PC-3 (cell line): ENCODE measurements at regions of chr17 and their contacts with region 1.

Region 1: DNA sequence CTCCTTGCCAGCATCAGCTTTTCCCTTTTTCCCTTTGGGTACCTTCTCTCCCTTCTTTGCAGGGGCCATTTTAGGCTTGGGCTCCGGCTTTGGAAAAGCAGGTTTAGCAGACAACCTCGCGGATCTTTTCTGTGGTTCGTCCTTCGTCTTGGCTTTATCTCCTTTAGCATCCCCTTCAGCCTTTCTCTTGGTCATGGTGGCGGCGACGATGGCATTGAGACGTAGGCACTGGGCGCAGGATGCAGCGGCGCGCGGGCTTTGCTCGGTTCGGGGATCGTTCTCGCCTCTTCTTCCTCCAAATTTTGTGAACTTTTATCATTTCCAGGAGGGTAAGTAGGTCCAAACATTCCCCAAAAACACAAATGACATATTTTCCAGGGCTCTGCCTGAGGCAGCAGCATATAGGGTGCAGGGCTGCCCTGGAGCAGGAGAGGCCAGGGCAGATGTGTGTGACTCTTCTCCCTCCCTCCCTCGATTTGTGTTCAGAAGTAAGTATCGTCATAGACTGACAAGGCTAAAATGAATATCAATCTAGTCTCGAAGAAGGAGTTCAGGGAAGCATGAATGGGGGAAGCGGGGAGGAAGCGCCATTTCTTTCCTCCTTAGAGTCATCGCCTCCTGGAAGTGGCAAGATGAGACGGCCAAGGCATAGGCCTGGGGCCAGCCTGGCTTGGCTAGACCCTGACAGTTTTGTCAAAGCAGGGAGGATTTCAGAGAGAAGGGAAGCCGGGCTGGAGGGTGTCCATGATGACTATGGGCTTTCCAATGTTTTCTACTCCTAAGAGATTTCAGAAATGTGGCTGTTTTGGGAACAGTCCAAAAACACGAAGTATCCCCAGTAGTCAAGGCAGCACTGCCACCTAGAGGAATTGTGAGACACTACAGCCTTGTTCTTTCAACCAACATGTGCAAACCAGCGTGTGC is 13.2 kb downstream of the CHCT1 start:
- DNase-seq: peak; percentile 98
- ATAC-seq: peak; percentile 68
- H3K4me3 ChIP-seq: peak overlapping the region; percentile 17; the same call in 1 of the 2 replicates
- H3K27ac ChIP-seq: no peak overlapping the region
- H3K4me1 ChIP-seq: peaks cover 7% of the 10 kb centered on the region
- H3K27me3 ChIP-seq: no peaks in the 10 kb centered on the region
- CTCF ChIP-seq: peak; percentile 98

Region 2: GRCh38 chr17:60127068-60128054 is 308.1 kb before region 1 on chr17:
- CTCF ChIA-PET with region 1: no interaction called
- POLR2A ChIA-PET with region 1: no interaction called
- intact Hi-C with region 1: no loop called
- DNase-seq: no peak
- ATAC-seq: no peak
- H3K4me3 ChIP-seq: no peak overlapping the region
- H3K27ac ChIP-seq: no peak overlapping the region
- H3K4me1 ChIP-seq: no peaks in the 10 kb centered on the region
- H3K27me3 ChIP-seq: no peaks in the 10 kb centered on the region
- CTCF ChIP-seq: no peak

Region 3: GRCh38 chr17:60142872-60143499 is 292.5 kb before region 1 on chr17:
- CTCF ChIA-PET with region 1: interaction called, 5 read pairs
- POLR2A ChIA-PET with region 1: no interaction called
- intact Hi-C with region 1: loop called (anchors 1 kb)
- DNase-seq: peak; percentile 96
- ATAC-seq: peak; percentile 89
- H3K4me3 ChIP-seq: peak overlapping the region; percentile 62
- H3K27ac ChIP-seq: no peak overlapping the region
- H3K4me1 ChIP-seq: peaks cover 11% of the 10 kb centered on the region
- H3K27me3 ChIP-seq: peaks cover 4% of the 10 kb centered on the region; the same call in 1 of the 2 replicates
- CTCF ChIP-seq: peak; percentile 96

Region 4: DNA sequence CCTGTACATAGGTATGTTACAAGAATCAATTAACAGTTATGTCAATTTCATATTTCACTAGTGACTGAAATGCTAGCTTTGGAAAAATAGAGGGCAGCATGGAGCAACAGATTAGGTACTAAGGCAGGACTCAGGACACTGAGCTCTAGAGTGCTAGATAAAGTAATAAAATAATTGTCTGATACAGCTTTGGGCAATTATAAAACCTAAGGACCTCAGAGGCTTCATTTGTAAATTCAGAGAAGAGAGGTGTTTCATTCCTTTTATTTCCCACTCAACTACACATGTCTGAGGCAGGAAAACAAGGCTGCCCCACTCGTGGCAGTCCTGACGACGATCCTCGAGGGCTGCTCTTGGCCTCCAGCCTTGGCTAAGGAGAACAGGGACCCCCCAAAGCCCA is 204.3 kb before region 1 on chr17:
- CTCF ChIA-PET with region 1: interaction called, 5 read pairs
- POLR2A ChIA-PET with region 1: no interaction called
- intact Hi-C with region 1: loop called (anchors 1 kb)
- DNase-seq: peak; percentile 61
- ATAC-seq: peak; percentile 84
- H3K4me3 ChIP-seq: no peak overlapping the region
- H3K27ac ChIP-seq: no peak overlapping the region
- H3K4me1 ChIP-seq: no peaks in the 10 kb centered on the region
- H3K27me3 ChIP-seq: no peaks in the 10 kb centered on the region
- CTCF ChIP-seq: peak; percentile 87

Region 5: DNA sequence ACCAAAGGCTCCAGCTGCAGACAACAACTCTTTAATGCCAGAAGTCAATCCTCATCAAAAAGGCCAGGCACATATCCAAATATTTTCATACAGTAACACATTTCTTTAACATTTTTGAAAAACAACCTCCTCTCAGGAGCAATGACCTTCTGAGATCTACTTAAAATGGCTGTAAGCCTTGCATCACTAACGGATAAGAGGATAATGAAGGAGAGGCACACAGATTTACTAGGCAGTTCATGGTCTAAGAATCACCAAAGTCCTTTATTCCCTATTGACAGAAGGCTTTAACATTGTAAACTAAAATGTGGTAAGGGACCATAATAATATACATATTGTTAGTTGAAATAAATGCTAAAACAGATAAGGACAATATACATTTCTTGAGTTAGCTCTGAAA is 158.2 kb before region 1 on chr17:
- CTCF ChIA-PET with region 1: interaction called, 12 read pairs
- POLR2A ChIA-PET with region 1: no interaction called
- intact Hi-C with region 1: no loop called
- DNase-seq: no peak
- ATAC-seq: no peak
- H3K4me3 ChIP-seq: no peak overlapping the region
- H3K27ac ChIP-seq: no peak overlapping the region
- H3K4me1 ChIP-seq: no peaks in the 10 kb centered on the region
- H3K27me3 ChIP-seq: no peaks in the 10 kb centered on the region
- CTCF ChIP-seq: no peak

Region 6: GRCh38 chr17:60315650-60316049 is 119.9 kb before region 1 on chr17:
- CTCF ChIA-PET with region 1: interaction called, 3 read pairs
- POLR2A ChIA-PET with region 1: no interaction called
- intact Hi-C with region 1: loop called (anchors 1 kb)
- DNase-seq: peak; percentile 39
- ATAC-seq: peak; percentile 78
- H3K4me3 ChIP-seq: no peak overlapping the region
- H3K27ac ChIP-seq: no peak overlapping the region
- H3K4me1 ChIP-seq: no peaks in the 10 kb centered on the region
- H3K27me3 ChIP-seq: no peaks in the 10 kb centered on the region
- CTCF ChIP-seq: peak; percentile 67

Region 7: GRCh38 chr17:60523822-60524473 is 88.4 kb after region 1 on chr17:
- CTCF ChIA-PET with region 1: no interaction called
- POLR2A ChIA-PET with region 1: no interaction called
- intact Hi-C with region 1: no loop called
- DNase-seq: no peak
- ATAC-seq: no peak
- H3K4me3 ChIP-seq: peak overlapping the region; percentile 94
- H3K27ac ChIP-seq: no peak overlapping the region
- H3K4me1 ChIP-seq: peaks cover 10% of the 10 kb centered on the region
- H3K27me3 ChIP-seq: no peaks in the 10 kb centered on the region
- CTCF ChIP-seq: no peak

Region 8: GRCh38 chr17:60641810-60642220 is 206.3 kb after region 1 on chr17:
- CTCF ChIA-PET with region 1: no interaction called
- POLR2A ChIA-PET with region 1: no interaction called
- intact Hi-C with region 1: loop called (anchors 5 kb)
- DNase-seq: peak; percentile 93
- ATAC-seq: peak; percentile 80
- H3K4me3 ChIP-seq: no peak overlapping the region
- H3K27ac ChIP-seq: peak overlapping the region; percentile 25
- H3K4me1 ChIP-seq: peaks cover 13% of the 10 kb centered on the region
- H3K27me3 ChIP-seq: no peaks in the 10 kb centered on the region
- CTCF ChIP-seq: peak; percentile 81